ENCODE measurements at regions of chr22 and their contacts with region 1.

Region 1: DNA sequence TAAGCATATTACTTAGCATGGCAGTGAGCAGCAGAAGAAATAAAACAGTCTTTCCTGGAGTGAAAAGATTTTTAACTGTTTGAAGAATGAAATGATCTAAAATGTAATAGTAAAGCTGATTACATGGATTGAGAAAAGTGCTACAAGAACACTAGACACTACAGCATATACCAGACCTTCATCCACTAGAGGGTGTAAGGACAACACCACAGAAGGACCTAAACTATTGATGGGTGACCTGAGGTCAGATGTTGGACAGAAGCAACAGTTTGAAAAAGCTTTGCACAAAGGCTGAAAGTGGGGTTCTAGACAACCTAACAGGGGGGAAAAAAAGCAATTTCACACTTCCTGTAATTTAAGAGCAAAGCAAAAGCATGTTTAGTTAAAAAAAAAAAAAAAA is 97.7 kb downstream of the RBFOX2 start:
- DNase-seq: no peak
- H3K4me3 ChIP-seq: no peak overlapping the region
- H3K27ac ChIP-seq: no peak overlapping the region
- H3K4me1 ChIP-seq: peaks cover 0 to 3% (median 0%) of the 10 kb centered on the region in 6 donors
- H3K27me3 ChIP-seq: no peaks in the 10 kb centered on the region
- CTCF ChIP-seq: peak in 8 of 11 experiments; percentile 22 to 68 (median 45)
- POLR2A ChIP-seq: no peak

Region 2: DNA sequence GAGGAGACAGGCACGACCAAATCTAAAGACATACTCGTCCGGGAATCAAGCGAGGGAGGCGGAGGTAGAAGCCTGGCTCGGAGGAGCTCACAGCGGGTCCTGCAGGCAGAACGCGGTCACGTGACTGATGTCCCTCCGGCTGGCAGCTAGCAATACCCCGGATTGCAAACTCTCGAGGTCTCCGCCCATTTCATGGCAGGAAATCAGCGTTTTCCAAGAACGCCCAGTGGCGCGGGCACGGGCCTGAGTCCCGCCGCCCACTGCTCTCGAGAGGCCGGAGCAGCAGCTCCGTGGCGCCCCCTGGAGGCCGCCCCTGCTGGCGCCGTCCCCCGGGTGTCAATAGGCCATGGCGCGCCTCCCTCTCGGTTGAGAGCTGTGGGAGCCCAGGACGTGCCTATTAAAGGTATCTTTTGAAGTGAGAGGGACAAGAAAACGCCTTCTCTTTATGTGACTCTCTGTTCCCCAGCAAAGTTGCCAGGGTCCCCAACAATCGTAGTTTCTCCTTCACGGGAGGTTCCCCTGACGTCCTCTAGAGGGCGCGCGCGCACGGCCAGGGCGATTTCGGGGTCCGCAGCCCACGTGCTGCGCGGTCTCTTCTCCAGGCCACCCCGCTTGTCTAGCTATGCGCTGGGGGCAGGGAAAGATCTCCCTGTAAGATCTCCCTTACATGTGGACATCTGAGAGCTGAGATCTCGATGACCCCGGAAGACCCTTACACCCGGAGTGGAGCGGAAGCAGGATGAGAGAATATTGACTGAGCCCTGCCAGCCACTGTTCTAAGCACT is 135.0 kb after region 1 on chr22:
- intact Hi-C with region 1: loop called (anchors 10 kb)
- DNase-seq: peak; percentile 90
- H3K4me3 ChIP-seq: peak overlapping the region; percentile 3 to 65 (median 35)
- H3K27ac ChIP-seq: peak overlapping the region; percentile 82 to 89 (median 84)
- H3K4me1 ChIP-seq: peaks cover 0 to 20% (median 15%) of the 10 kb centered on the region in 6 donors
- H3K27me3 ChIP-seq: peaks cover 0 to 22% (median 0%) of the 10 kb centered on the region in 7 donors
- CTCF ChIP-seq: peak; percentile 84 to 98 (median 96)
- POLR2A ChIP-seq: no peak

Region 3: DNA sequence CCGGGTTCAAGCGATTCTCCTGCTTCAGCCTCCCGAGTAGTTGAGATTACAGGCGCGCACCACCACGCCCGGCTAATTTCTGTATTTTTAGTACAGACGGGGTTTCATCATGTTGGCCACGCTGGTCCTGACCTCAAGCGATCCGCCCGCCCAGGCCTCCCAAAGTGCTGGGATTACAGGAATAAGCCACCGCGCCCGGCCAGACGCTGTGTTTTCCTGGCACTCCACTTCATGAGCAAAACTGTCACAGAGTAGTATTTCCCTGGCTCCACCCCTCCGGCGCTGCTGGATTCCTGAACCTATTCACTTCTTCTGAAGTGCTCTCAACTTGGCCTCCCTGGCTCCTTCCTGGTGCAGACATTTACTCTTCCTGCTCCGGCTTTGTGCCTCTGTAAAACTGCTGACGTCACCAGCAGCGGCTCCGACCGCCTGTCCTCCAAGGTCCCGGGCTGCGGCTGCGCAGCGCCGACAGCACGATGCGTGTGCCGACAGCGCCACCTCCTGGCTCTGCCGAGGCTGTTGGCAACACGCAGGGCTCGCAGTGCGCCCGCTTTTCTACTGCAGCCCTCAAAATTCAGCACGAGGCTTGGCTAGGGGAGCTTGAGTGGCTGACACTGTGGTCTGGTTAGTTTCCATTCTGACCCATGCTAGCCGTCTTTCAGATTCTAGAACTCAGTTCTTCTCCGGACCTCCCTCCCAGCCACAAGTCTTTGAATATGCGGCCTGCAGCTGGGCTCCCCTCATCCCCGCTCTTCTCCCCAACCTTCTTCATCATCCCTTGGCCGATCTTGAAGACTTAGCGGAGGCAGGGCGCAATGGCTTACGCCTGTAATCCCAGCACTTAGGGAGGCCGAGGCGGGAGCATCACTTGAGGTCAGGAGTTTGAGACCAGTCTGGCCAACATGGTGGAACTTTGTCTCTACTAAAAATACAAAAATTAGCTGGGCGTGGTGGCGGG is 193.0 kb after region 1 on chr22:
- intact Hi-C with region 1: loop called (anchors 10 kb)
- DNase-seq: peak; percentile 98
- H3K4me3 ChIP-seq: peak overlapping the region in 3 of 8 donors; percentile 5 to 59 (median 17)
- H3K27ac ChIP-seq: peak overlapping the region; percentile 45 to 86 (median 79)
- H3K4me1 ChIP-seq: peaks cover 3 to 25% (median 16%) of the 10 kb centered on the region in 6 donors
- H3K27me3 ChIP-seq: peaks cover 0 to 6% (median 0%) of the 10 kb centered on the region in 7 donors
- CTCF ChIP-seq: peak; percentile 96 to 100 (median 98)
- POLR2A ChIP-seq: no peak

Region 4: DNA sequence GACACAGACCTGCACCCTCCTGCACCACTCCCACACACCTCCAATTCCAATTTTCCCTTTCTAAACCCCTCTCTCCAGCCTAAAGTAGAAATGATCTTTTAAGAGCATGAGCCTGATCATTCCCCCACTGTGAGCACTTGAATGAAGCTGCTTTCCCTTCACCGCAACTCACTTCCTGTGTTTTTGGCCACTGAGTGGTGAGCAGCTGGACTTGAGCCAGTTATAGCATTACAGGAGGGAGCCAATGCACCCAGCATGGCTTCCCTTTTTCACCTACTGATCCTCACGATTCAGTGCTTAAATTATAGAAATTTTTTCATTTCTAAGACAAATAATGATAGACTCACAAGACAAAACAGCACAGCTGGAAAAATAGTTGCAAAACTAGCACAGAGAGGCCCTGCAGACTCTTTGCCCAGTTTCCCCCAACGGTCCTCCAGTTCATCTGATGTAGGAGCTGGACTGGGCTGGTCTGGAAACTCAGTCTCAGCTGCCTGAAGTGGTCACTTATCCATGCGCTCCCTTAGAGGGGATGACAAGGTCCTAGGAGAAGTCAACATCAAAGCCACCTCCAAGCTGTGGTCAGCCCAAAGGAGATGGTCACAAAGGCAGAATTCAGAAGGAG is 280.4 kb after region 1 on chr22:
- intact Hi-C with region 1: no loop called
- DNase-seq: no peak
- H3K4me3 ChIP-seq: no peak overlapping the region
- H3K27ac ChIP-seq: peak overlapping the region in 2 of 8 donors; percentile 19 to 41
- H3K4me1 ChIP-seq: peaks cover 6 to 60% (median 32%) of the 10 kb centered on the region in 6 donors
- H3K27me3 ChIP-seq: peaks cover 0 to 6% (median 0%) of the 10 kb centered on the region in 7 donors
- CTCF ChIP-seq: no peak
- POLR2A ChIP-seq: no peak

Region 5: DNA sequence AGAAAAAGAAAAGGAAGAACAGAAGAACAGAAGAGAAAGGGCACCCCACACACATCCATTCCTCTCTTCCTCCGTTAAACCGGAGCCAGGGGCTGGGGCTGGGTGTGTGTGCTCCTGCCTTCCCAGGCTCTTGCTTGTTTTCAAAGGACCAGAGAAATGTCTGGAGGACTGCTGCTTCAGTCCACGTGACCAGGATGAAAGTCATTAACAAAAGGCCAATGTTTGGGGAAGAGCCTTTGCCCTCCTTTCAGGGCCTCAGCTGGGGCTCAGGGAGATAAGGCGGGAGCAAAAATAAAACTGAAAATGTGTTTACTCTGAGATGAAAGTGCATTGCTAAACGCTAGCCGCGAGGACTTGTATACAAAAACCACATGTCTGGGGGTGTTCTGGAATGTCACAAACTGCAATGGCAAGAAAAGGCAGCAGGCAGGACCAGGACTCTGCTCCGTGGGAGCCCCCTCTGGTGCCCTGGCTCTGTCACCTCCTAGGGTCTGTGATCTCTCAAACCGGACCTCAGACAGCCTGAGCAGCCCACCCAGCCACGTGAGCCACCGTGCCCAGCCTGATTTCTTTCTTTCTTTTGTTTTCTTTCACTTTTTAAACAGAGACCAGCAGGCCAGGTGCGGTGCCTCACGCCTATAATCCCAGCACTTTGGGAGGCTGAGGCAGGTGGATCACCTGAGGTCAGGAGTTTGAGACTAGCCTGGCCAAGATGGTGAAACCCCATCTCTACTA is 488.4 kb after region 1 on chr22:
- intact Hi-C with region 1: no loop called
- DNase-seq: no peak
- H3K4me3 ChIP-seq: peak overlapping the region in 3 of 8 donors; percentile 7 to 42 (median 9)
- H3K27ac ChIP-seq: peak overlapping the region; percentile 60 to 88 (median 78)
- H3K4me1 ChIP-seq: peaks cover 14 to 81% (median 48%) of the 10 kb centered on the region in 6 donors
- H3K27me3 ChIP-seq: no peaks in the 10 kb centered on the region
- CTCF ChIP-seq: peak in 1 of 11 experiments; percentile 9
- POLR2A ChIP-seq: no peak